Activated B cell treated with CpG ODN at 0.5 μM for 24 hours (primary cell): ENCODE measurements at regions of chr1 and their contacts with region 1.

Region 1: DNA sequence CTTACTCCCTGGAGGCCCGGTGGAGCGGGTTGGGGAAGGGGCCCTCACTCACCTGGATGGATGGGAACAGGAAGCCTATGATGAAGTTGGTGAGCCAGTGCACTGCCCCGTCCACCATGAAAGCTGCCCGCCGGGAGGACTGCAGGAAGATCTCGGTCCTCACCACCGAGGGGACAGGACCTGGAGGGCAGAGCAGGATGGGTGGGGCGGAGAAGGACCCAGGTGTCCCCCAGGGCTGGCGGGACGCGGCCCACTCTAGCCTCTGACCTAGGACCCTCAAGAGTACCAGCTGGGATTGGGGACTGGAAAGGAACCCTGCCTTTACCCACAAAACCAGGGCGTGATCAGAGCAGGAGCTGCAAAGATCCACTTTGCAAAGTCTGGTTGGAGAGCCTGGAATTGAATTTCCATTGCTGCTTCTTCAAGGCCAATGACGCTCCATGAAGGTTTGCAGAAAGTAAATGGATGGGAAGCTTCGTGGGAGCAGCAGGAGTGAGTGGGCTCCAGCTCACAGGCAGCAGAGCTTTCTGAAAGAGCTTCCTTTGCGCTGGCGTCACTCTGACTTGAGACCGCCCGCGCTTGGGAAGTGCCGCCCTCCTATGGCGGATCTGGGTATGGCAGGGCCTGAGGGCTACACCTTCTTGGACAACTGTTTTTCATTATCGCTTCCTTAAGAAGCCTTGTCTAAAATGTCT is 21.4 kb downstream of the SLC2A7 start:
- DNase-seq: peak; percentile 74
- ATAC-seq: peak; percentile 75
- H3K4me3 Mint-ChIP-seq: no peak overlapping the region
- H3K27ac Mint-ChIP-seq: no peak overlapping the region
- H3K4me1 Mint-ChIP-seq: peaks cover 34% of the 10 kb centered on the region
- H3K27me3 Mint-ChIP-seq: peaks cover 2% of the 10 kb centered on the region
- CTCF ChIP-seq: peak; percentile 78

Region 2: DNA sequence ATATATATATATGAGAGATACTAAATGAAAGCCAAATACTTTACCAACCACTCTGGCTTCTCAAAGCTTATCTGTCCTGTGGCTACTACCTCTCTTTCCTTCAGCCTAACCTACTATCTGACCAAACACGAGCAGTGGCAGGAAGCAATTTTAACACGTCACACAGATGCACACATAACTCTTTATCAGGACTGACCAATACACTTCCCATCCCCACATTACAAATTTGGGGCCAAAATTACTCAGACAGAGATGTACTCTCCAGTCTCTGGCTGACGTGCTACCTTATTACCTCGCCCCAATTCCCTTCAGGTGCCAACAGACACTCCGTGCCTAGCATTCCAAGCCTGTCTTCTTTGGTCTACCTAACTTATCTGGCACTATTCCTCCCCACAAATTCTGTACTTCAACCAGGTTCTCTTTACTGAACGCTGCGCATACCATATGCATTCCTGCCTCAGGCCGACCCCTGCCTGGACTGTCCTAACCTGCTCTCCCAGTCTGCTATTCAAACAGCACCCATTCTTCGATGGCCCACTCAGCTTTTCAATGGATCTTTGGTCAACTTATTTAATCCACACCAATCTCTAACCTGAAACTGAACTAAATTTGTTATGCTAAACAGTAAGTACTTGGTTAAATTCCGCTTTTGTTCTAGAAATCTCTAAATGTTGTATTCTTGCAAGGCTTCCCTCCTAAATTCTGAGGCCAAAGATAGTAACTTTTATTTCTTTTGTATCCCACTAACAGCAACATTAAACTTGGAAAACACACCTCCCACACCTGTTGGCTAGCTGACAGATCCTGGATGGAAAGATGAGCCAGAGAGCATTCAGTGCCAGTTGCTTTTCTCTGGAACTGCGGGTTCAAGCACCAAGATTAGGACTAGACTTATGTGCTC is 215.3 kb before region 1 on chr1:
- CTCF ChIA-PET with region 1: no interaction called
- POLR2A ChIA-PET with region 1: no interaction called
- intact Hi-C with region 1: no loop called
- DNase-seq: no peak
- ATAC-seq: no peak
- H3K4me3 Mint-ChIP-seq: no peak overlapping the region
- H3K27ac Mint-ChIP-seq: no peak overlapping the region
- H3K4me1 Mint-ChIP-seq: peaks cover 9% of the 10 kb centered on the region
- H3K27me3 Mint-ChIP-seq: no peaks in the 10 kb centered on the region
- CTCF ChIP-seq: no peak

Region 3: GRCh38 chr1:8858888-8859706 is 145.8 kb before region 1 on chr1:
- CTCF ChIA-PET with region 1: interaction called, 11 read pairs
- POLR2A ChIA-PET with region 1: no interaction called
- intact Hi-C with region 1: loop called (anchors 1 kb)
- DNase-seq: no peak
- ATAC-seq: peak; percentile 80
- H3K4me3 Mint-ChIP-seq: no peak overlapping the region
- H3K27ac Mint-ChIP-seq: peak overlapping the region; percentile 13
- H3K4me1 Mint-ChIP-seq: peaks cover 21% of the 10 kb centered on the region
- H3K27me3 Mint-ChIP-seq: no peaks in the 10 kb centered on the region
- CTCF ChIP-seq: no peak

Region 4: GRCh38 chr1:8987881-8988617 is 16.8 kb before region 1 on chr1:
- CTCF ChIA-PET with region 1: interaction called, 16 read pairs
- POLR2A ChIA-PET with region 1: no interaction called
- intact Hi-C with region 1: no loop called
- DNase-seq: peak; percentile 59
- ATAC-seq: peak; percentile 91
- H3K4me3 Mint-ChIP-seq: no peak overlapping the region
- H3K27ac Mint-ChIP-seq: no peak overlapping the region
- H3K4me1 Mint-ChIP-seq: peaks cover 10% of the 10 kb centered on the region
- H3K27me3 Mint-ChIP-seq: peaks cover 11% of the 10 kb centered on the region
- CTCF ChIP-seq: peak; percentile 83

Region 5: DNA sequence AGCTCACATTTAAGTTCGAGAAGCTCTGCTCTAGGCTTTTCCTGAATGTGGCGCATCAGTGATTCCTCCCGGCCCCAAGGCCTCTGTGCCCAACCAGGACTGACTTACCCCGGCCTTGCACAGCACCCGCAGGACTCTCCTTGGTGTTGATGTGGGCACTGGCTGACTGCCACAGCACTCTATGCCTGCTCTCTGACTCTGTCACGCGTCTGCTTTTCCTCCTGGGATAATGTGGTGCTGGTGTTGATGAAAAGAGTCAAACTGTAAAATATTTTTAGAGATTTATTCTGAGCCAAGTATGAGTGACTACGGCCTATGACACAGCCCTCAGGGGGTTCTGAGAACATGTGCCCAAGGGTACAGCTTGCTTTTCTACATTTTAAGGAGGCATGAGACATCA is 80.1 kb after region 1 on chr1:
- CTCF ChIA-PET with region 1: interaction called, 3 read pairs
- POLR2A ChIA-PET with region 1: interaction called, 3 read pairs
- intact Hi-C with region 1: loop called (anchors 5 kb)
- DNase-seq: no peak
- ATAC-seq: no peak
- H3K4me3 Mint-ChIP-seq: no peak overlapping the region
- H3K27ac Mint-ChIP-seq: no peak overlapping the region
- H3K4me1 Mint-ChIP-seq: peaks cover 52% of the 10 kb centered on the region
- H3K27me3 Mint-ChIP-seq: peaks cover 12% of the 10 kb centered on the region
- CTCF ChIP-seq: no peak

Region 6: DNA sequence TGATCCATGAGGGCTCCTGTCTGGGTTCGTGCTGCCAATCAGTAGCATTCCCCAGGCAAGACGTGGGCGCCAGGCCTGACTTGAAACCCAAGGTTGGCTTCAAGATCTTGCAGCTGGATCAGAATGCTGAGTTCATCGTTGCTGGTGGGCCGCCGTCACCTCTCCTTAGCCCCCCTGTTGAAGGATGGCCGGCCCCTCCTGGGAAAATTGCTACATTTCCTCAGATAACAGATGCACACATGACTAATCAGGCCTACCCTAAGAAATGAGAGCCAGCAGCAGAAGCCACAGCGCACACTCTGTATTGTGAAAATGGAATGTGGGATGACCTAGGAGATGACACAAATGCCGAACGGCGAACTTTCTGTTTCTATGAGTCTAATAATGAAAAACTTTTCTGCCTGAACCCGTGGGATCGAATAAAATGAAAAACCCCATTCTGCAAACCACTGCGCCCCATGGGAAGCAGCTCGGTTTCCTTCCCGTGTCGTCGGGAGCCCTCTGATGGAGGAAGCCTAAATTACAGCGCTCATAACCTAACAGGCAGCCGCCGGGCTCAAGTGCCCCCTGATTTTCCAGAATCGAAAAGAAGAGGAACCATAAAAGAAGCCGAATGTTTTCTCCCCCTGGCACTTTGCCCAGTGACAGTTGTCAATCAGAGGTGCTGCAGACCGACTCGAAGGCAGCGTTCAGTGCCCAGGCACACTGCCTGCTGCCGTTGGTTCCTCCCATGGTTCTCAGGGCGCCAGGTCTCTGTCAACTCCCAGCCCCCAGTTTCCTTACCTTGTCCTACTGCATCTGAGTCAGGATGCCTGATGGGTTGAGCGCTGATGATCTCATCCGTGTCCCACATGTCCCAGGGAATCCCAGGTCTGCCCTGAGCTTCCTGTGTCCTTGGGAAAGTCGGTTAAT is 191.5 kb after region 1 on chr1:
- CTCF ChIA-PET with region 1: no interaction called
- POLR2A ChIA-PET with region 1: no interaction called
- intact Hi-C with region 1: loop called (anchors 5 kb)
- DNase-seq: peak; percentile 51
- ATAC-seq: peak; percentile 82
- H3K4me3 Mint-ChIP-seq: peak overlapping the region; percentile 57
- H3K27ac Mint-ChIP-seq: no peak overlapping the region
- H3K4me1 Mint-ChIP-seq: peaks cover 16% of the 10 kb centered on the region
- H3K27me3 Mint-ChIP-seq: peaks cover 33% of the 10 kb centered on the region
- CTCF ChIP-seq: no peak